Activated naive CD4-positive, alpha-beta T cell treated with anti-CD3 and anti-CD28 coated beads for 36 hours (primary cell): ENCODE measurements at regions of chr13 and their contacts with region 1.

Region 1: GRCh38 chr13:100573121-100573520 is 15.5 kb downstream of the GGACT start:
- DNase-seq: peak; percentile 88
- H3K4me3 Mint-ChIP-seq: no peak overlapping the region
- H3K27ac Mint-ChIP-seq: no peak overlapping the region
- H3K4me1 Mint-ChIP-seq: peaks cover 13% of the 10 kb centered on the region
- H3K27me3 Mint-ChIP-seq: no peaks in the 10 kb centered on the region

Region 2: GRCh38 chr13:100588331-100589177 is 15.4 kb after region 1 on chr13 and contains the start of gene GGACT:
- CTCF ChIA-PET with region 1: interaction called, 26 read pairs
- intact Hi-C with region 1: loop called (anchors 1 kb)
- DNase-seq: peak; percentile 84
- H3K4me3 Mint-ChIP-seq: peak within 1 kb of the TSS; percentile 75
- H3K27ac Mint-ChIP-seq: peak within 1 kb of the TSS; percentile 87
- H3K4me1 Mint-ChIP-seq: peaks cover 39% of the 10 kb centered on the region
- H3K27me3 Mint-ChIP-seq: no peaks in the 10 kb centered on the region
- total RNA-seq, gene GGACT: 3.9 to 6.6 TPM

Region 3: GRCh38 chr13:100644371-100644770 is 71.2 kb after region 1 on chr13:
- CTCF ChIA-PET with region 1: interaction called, 4 read pairs
- intact Hi-C with region 1: loop called (anchors 5 kb)
- DNase-seq: no peak
- H3K4me3 Mint-ChIP-seq: no peak overlapping the region
- H3K27ac Mint-ChIP-seq: no peak overlapping the region
- H3K4me1 Mint-ChIP-seq: no peaks in the 10 kb centered on the region
- H3K27me3 Mint-ChIP-seq: no peaks in the 10 kb centered on the region

Region 4: DNA sequence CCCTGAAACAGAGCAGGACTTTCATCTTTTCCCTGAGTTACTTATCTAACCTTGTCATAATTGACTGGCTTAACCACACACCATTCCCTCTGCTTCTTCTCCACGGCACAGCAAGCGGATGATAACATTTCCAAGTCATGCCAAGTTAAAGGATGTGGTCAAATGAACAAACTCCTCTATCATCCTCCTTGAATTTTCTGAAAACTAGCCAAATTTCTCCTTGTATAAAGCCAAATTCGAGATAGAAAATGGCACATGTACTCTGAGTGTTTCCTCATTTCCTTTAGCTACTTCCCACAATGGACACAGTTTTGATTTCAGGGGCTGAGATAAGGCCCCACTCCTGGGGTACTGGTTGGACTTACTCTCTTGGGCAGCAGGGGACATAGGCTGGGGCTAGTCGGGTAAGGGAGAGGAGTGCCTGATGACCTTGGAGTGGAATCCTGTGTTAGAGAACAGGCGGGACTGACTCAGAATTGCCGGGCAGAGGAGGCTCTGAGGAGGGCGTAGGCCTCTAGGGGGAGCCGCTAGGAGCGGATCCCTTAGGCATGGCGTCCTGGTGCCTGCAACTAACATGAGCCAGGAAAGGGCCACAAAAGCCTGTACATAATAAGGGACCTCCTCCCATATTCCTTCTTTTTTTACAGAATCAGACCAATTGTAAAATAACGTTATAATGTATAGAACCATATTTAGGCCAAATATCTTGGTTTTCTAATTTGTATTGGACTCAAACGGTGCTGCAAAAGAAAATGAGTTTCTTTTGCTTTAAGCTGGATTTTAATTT is 121.8 kb after region 1 on chr13:
- CTCF ChIA-PET with region 1: no interaction called
- intact Hi-C with region 1: no loop called
- DNase-seq: no peak
- H3K4me3 Mint-ChIP-seq: no peak overlapping the region
- H3K27ac Mint-ChIP-seq: no peak overlapping the region
- H3K4me1 Mint-ChIP-seq: no peaks in the 10 kb centered on the region
- H3K27me3 Mint-ChIP-seq: peaks cover 29% of the 10 kb centered on the region

Region 5: DNA sequence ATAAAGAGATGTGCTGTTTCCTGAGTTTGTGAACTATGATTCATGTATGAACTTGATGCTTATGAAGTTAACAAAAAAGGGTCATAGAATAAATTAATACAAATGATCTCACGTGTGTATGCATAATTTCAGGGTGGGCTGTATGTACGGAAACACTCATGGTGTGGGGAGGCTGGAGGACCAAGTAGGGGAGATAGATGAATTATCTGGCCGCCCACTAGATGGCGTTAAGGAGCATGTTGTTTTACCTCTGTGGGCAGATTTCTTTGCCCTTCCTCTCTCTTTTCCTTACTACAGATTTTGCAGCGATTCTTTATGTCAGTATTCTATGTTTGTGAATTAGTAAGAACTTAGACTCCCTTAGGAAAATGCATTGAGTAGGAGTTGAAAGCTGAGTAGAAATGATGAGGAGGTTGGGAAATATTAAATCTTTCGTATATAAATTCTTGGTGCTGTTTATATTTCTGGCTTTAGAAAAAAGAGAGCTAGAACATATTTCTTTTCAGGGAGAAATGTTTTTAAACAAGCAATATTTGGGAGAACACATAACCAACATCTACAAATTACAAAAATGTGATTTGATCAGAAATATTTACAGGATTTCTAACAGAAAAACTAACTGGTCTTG is 148.9 kb after region 1 on chr13:
- CTCF ChIA-PET with region 1: no interaction called
- intact Hi-C with region 1: loop called (anchors 1 kb)
- DNase-seq: peak; percentile 75
- H3K4me3 Mint-ChIP-seq: no peak overlapping the region
- H3K27ac Mint-ChIP-seq: no peak overlapping the region
- H3K4me1 Mint-ChIP-seq: no peaks in the 10 kb centered on the region
- H3K27me3 Mint-ChIP-seq: peaks cover 6% of the 10 kb centered on the region

Region 6: DNA sequence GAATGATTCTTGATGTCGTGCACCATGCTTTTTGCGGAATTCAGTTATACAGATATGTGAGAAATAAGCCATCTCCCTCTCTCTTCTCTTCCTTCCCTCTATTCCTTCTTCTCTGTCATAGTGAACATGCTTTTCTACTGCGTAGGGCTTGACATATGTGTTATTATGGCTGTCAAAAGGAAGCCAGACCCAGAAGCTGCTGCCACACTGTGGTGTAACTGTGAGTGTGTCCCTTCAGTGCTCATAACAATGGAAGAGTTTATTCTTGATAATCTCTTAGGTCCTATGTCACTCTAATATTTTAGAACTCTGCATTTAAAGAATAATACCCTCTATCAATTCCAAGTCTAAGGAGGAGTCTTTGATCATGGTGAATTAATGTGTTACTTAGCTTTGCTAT is 310.3 kb after region 1 on chr13:
- CTCF ChIA-PET with region 1: no interaction called
- intact Hi-C with region 1: loop called (anchors 1 kb)
- DNase-seq: no peak
- H3K4me3 Mint-ChIP-seq: no peak overlapping the region
- H3K27ac Mint-ChIP-seq: no peak overlapping the region
- H3K4me1 Mint-ChIP-seq: no peaks in the 10 kb centered on the region
- H3K27me3 Mint-ChIP-seq: peaks cover 17% of the 10 kb centered on the region

Region 7: GRCh38 chr13:101098873-101099272 is 525.8 kb after region 1 on chr13:
- CTCF ChIA-PET with region 1: interaction called, 9 read pairs
- intact Hi-C with region 1: loop called (anchors 1 kb)
- DNase-seq: no peak
- H3K4me3 Mint-ChIP-seq: no peak overlapping the region
- H3K27ac Mint-ChIP-seq: no peak overlapping the region
- H3K4me1 Mint-ChIP-seq: no peaks in the 10 kb centered on the region
- H3K27me3 Mint-ChIP-seq: peaks cover 2% of the 10 kb centered on the region

Region 8: GRCh38 chr13:101127741-101128353 is 554.7 kb after region 1 on chr13:
- CTCF ChIA-PET with region 1: interaction called, 18 read pairs
- intact Hi-C with region 1: loop called (anchors 1 kb)
- DNase-seq: peak; percentile 34
- H3K4me3 Mint-ChIP-seq: no peak overlapping the region
- H3K27ac Mint-ChIP-seq: no peak overlapping the region
- H3K4me1 Mint-ChIP-seq: peaks cover 2% of the 10 kb centered on the region
- H3K27me3 Mint-ChIP-seq: peaks cover 3% of the 10 kb centered on the region